ENCODE measurements at regions of chr2 and their contacts with region 1.

Region 1: DNA sequence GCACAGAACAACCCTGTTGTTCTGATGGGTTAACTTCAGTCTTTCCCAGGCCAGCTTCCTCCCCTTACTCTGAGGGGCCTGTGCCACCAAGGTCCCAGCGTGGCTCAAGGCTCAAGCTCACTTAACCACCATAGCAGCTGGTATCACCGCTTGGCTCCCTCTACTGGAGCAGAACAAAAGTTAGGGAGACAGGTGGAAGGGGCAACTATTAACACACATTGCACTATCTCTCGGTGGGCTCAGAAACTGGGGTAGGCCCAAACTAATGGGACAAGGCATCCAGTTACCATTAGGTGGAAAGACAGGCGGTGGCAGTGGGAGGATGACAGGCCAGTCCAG is 88.7 kb upstream of the ATL2 start:
- DNase-seq: peak; percentile 34
- ATAC-seq: peak; percentile 66

Region 2: DNA sequence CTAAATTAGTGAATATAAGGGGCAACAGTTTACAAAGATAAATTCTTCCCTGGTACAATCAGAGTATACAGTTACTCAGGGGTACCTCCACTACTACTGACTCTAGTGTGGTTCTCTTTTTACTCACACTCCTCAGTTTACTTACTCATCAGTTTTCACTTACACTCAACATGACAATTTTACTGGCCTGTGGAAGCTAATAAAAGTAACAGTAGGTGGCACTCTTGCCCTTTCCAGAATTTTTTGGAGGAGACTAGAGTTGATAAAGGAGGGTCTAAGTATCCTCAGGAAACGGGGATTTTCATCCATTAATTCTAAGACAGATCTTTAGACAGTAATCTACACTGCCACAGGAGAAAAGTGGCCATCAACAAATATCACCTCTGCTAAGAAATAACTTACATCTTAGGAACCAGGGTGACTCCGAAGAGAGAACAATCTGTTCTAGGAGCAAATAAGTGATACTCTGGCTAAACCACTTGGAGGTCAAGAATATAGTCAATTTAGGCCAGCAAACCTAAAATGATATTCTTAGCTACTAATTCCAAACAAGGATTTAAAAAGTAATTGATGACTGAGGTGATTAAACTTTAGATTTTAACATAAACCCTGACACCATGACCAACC is 149.9 kb before region 1 on chr2:
- intact Hi-C with region 1: loop called (anchors 10 kb)
- DNase-seq: no peak
- ATAC-seq: peak; percentile 59

Measured in left ventricle myocardium superior (tissue), 1 donor.